ENCODE measurements at regions of chr12 and their contacts with region 1.

Region 1: DNA sequence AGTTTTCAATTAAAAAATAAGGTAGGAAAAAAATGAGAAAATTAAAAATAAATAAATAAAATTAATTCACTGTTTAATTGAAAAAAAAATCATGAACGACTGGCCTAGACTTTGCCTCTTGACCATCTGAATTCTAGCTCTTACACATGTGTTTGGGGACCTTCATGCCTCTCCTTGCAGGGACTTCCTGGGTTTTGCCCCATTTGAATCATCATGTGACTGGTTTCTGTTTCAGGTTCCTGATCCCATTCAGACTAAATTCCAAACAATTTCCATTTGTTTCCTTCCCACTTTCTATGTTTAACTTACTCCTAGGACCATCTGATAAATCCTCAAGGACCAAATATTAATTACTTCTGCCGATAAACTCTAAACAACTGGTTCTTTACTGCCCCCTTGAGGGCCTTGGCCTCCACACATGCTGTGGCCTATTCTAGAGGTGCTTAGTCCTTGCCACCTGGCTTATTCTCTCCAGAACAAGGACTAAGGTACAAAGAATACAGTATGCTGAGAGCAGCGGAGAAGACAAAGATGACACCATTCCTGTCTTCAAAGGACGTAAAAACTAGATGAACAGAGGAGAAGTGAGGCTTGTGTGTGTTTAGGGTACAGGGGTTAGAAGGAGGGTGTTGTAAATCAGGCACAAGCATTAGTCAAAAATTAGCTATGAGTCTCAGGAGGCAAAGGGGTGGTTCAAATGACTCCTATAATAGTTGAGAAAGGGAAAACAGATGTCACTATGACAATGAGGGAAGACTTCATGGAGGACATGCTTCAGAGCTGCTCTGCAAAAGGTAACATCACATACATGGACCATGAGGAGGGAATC is 125.8 kb upstream of the AVPR1A start:
- H3K4me3 Mint-ChIP-seq: no peak overlapping the region
- H3K27ac Mint-ChIP-seq: no peak overlapping the region
- H3K4me1 Mint-ChIP-seq: no peaks in the 10 kb centered on the region
- H3K27me3 Mint-ChIP-seq: no peaks in the 10 kb centered on the region

Region 2: DNA sequence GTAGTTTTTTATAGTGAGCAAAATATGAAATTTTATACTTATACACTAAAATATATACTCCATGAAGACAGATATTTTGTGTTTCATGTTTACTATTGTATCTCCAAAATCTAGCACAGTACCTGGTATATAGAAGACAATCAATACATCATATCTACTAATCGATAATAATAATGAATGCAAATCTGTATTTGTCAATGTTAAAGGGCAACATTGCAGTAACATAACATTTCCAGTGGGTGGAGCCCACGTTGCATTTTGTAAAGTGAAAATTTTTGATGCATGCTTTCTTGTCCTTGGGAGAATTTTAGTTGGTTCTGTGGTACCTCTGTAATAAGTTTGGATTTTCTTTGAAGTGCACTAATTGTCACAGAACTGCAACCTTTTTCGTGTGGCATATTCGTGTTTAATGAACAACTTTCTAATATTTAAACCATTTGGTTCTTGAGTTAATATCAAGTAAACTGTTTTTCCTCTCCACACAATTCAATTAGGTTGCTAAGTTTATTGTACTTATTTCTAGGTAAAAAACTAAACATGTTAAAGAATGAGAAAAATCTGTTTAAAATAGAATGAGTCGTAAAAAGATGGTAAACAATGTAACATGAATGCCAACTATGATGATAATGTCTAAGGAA is 173.1 kb before region 1 on chr12:
- intact Hi-C with region 1: loop called (anchors 10 kb)
- H3K4me3 Mint-ChIP-seq: no peak overlapping the region
- H3K27ac Mint-ChIP-seq: no peak overlapping the region
- H3K4me1 Mint-ChIP-seq: no peaks in the 10 kb centered on the region
- H3K27me3 Mint-ChIP-seq: no peaks in the 10 kb centered on the region

Region 3: GRCh38 chr12:63348556-63348955 is 71.8 kb after region 1 on chr12:
- intact Hi-C with region 1: no loop called
- H3K4me3 Mint-ChIP-seq: no peak overlapping the region
- H3K27ac Mint-ChIP-seq: no peak overlapping the region
- H3K4me1 Mint-ChIP-seq: no peaks in the 10 kb centered on the region
- H3K27me3 Mint-ChIP-seq: no peaks in the 10 kb centered on the region

Measured in dendritic cell treated with granulocyte-macrophage colony-stimulating factor and Interleukin-4, amounts not matched to agents 40 ng/mL and 50 ng/mL, for 4 days (primary cell).